ENCODE measurements at regions of chr13 and their contacts with region 1.

Region 1: GRCh38 chr13:110915057-110915873 is at the start of gene ANKRD10:
- DNase-seq: peak; percentile 98 to 99
- ATAC-seq: peak; percentile 91 to 97 (median 93)
- H3K4me3 ChIP-seq: peak within 1 kb of the TSS; percentile 71 to 99 (median 92)
- H3K27ac ChIP-seq: peak within 1 kb of the TSS; percentile 97 to 100 (median 100)
- H3K4me1 ChIP-seq: peaks cover 6 to 57% (median 48%) of the 10 kb centered on the region in 9 donors
- H3K27me3 ChIP-seq: no peaks in the 10 kb centered on the region
- CTCF ChIP-seq: peak in 8 of 9 donors; percentile 80 to 100 (median 92)
- total RNA-seq, gene ANKRD10: 38.1 to 71.4 (median 49.0) TPM

Region 2: DNA sequence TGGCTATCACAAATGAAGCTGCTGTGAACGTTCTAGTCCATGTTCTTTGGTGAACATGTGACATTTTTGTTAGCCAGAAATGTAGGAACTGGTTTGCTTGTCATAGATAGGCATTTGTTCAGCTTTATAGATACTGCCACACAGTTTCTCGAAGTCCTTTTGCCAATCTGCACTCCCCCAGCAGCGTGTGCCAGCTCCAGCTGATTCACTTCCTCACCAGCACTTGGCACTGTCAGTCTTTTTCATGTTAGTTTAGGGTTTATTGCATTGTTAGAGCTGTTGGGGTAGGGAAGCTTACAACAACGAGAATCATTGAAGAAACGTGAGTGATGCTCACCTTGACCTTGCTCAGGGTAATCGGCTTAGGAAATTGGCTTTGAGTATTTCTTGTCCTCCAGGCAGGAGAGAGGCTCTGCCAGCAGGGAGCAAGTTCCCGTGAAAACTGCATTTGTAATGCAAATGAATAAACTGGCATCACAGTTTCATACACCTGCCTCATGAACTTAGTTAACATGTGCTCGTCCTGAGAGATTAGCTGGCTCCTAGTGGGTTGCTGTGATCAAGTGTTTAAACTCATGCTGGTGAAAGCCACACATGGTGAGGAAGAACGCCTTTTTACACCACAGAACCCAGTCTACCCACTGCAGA is 117.9 kb before region 1 on chr13:
- intact Hi-C with region 1: no loop called
- DNase-seq: no peak
- ATAC-seq: no peak
- H3K4me3 ChIP-seq: no peak overlapping the region
- H3K27ac ChIP-seq: no peak overlapping the region
- H3K4me1 ChIP-seq: peaks cover 0 to 22% (median 0%) of the 10 kb centered on the region in 9 donors
- H3K27me3 ChIP-seq: peaks cover 0 to 55% (median 30%) of the 10 kb centered on the region in 7 donors
- CTCF ChIP-seq: no peak

Region 3: GRCh38 chr13:110819203-110820014 is 95.9 kb before region 1 on chr13:
- intact Hi-C with region 1: loop called in 1 of 10 experiments (anchors 5 kb)
- DNase-seq: peak; percentile 69 to 81
- ATAC-seq: peak; percentile 87 to 95 (median 92)
- H3K4me3 ChIP-seq: no peak overlapping the region
- H3K27ac ChIP-seq: no peak overlapping the region
- H3K4me1 ChIP-seq: peaks cover 0 to 8% (median 0%) of the 10 kb centered on the region in 9 donors
- H3K27me3 ChIP-seq: no peaks in the 10 kb centered on the region
- CTCF ChIP-seq: peak; percentile 82 to 99 (median 98)

Region 4: GRCh38 chr13:111006506-111007031 is 91.3 kb after region 1 on chr13:
- intact Hi-C with region 1: loop called in 6 of 10 experiments (anchors 1 to 5 kb)
- DNase-seq: peak; percentile 70 to 88
- ATAC-seq: peak; percentile 95 to 98 (median 96)
- H3K4me3 ChIP-seq: peak overlapping the region in 2 of 10 donors; percentile 18 to 28
- H3K27ac ChIP-seq: peak overlapping the region; percentile 73 to 93 (median 86)
- H3K4me1 ChIP-seq: peaks cover 2 to 35% (median 25%) of the 10 kb centered on the region in 9 donors
- H3K27me3 ChIP-seq: no peaks in the 10 kb centered on the region
- CTCF ChIP-seq: no peak

Region 5: DNA sequence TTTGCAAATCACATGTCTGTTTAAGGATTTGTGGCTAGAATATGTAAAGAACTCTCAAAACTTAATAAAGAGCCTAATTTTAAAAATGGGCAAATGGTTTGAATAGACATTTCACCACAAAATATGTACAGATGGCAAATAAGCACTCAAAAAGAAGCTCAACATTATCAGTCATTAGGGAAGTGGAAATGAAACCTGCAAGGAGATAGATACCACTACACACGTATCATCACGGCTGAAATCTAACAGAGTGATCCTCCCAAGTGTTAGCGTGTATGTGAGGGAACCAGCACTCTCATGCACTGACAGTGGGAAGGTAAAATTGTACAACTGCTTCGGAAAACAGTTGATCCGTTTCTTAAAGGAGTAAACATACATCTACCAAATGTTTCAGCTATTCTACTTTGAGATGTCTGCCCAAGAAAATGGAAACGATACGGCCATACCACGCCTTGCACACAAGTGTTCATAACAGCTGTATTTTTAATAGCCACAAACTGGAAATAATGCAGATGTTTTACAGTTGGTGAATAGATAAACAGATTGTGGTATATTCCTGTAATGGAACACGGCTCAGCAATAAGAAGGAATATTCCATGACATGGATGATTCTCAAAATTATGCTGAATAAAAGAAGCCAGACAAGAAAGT is 214.3 kb after region 1 on chr13:
- intact Hi-C with region 1: no loop called
- DNase-seq: no peak
- ATAC-seq: no peak
- H3K4me3 ChIP-seq: no peak overlapping the region
- H3K27ac ChIP-seq: no peak overlapping the region
- H3K4me1 ChIP-seq: no peaks in the 10 kb centered on the region
- H3K27me3 ChIP-seq: no peaks in the 10 kb centered on the region
- CTCF ChIP-seq: no peak

Region 6: GRCh38 chr13:111216166-111216960 is 301.1 kb after region 1 on chr13:
- intact Hi-C with region 1: loop called in 5 of 10 experiments (anchors 10 kb)
- DNase-seq: peak in 1 of 2 donors; percentile 43
- ATAC-seq: peak; percentile 41 to 63 (median 52)
- H3K4me3 ChIP-seq: no peak overlapping the region
- H3K27ac ChIP-seq: peak overlapping the region in 5 of 10 donors; percentile 10 to 51 (median 23)
- H3K4me1 ChIP-seq: peaks cover 9 to 95% (median 78%) of the 10 kb centered on the region in 9 donors
- H3K27me3 ChIP-seq: no peaks in the 10 kb centered on the region
- CTCF ChIP-seq: peak in 8 of 9 donors; percentile 16 to 62 (median 50)

Measured in heart right ventricle (tissue), 16 donors.